Aorta (tissue), 5 donors: ENCODE measurements at regions of chr6 and their contacts with region 1.

Region 1: DNA sequence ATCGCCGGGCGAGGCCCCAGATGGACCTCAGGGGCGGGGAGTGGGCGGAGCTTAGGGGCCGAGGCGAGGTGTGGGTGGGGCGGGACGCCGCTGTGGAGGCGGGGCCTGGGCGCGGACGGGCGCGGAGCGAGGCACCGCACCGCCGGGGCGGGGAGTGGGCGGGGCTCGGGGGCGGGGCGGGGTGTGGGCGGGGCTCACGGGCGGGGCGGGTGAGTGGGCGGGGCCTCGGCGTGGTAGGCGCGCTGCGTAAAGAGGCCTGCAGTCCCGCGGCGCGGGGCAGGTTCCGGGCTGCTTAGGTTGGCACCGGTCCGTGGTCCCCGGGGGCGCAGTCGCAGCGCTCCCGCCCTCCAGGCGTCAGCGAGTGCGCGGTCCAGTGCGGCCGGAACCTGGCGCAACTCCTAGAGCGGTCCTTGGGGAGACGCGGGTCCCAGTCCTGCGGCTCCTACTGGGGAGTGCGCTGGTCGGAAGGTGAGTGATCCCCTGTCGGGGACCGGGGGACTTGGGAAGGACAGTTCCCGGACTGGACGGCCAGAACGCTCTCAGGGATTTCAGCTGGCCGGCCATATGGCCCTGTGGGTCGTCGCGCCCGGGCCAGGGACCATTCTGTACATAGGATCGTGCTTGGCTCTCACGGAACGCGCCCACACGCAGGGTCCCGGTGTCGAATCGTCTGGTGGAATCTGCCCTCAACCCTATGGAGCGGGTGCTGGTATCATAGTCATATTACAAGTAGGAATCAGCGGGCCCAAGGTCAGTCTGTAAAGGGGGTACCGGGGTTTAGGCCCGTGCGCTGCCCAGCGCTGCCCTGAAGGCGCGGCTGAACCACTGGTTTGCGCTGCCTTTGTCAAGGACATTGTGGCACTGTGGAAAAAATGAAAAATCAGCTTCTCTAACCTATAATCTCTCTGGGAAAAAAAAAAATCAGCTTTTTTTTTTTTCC is at the start of gene NQO2:
- DNase-seq: peak; percentile 95 to 98
- ATAC-seq: peak; percentile 96
- H3K4me3 ChIP-seq: peak within 1 kb of the TSS; percentile 11 to 36
- H3K27ac ChIP-seq: peak within 1 kb of the TSS in 1 of 2 donors; percentile 60
- H3K4me1 ChIP-seq: peaks cover 0 to 3% of the 10 kb centered on the region in 2 donors
- H3K27me3 ChIP-seq: no peaks in the 10 kb centered on the region
- total RNA-seq, gene NQO2: 23.2 to 40.3 TPM

Region 2: DNA sequence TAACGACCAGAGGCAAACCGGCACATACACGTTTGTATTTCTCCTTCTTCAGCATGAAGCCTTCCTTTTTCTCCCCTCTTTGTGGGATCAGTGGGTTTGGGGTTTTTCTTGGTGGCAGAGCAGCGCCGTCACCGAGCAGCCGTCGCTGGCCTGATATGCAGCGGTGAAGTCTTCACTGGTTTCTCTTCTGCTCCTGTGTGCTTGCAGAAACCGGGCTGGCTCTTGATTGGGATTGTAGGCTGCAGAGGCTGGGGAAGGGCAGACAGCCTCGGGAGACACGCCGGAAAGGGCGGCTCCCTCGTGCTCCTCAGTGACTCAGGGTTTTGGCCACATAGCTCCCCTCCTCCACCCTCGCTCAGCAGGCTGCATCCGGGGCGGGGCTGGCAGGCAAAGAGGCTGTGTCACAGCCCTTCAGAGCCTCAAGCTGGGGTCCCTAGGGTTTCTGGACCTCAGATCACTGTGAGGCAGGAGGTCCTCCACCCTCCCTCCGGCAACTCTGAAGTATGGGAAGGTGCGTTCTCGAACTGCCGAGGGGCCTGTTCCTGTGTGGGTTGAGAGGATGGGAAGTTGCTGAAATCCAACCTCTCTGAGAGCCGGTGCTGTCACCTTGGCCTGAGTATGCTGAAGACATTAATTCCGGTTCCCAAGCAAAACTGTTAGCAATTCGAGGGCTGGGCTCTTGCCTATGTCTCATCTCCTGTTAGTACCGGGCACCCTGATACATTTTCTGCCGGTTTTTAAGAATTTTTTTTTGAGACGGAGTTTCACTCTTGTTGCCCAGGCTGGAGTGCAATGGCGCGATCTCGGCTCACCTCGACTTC is 24.0 kb after region 1 on chr6:
- intact Hi-C with region 1: loop called in 1 of 2 experiments (anchors 2 kb)
- DNase-seq: peak; percentile 97
- ATAC-seq: peak; percentile 95
- H3K4me3 ChIP-seq: peak overlapping the region in 1 of 2 donors; percentile 40
- H3K27ac ChIP-seq: peak overlapping the region in 1 of 2 donors; percentile 89
- H3K4me1 ChIP-seq: no peaks in the 10 kb centered on the region
- H3K27me3 ChIP-seq: no peaks in the 10 kb centered on the region

Region 3: GRCh38 chr6:3052481-3053230 is 52.8 kb after region 1 on chr6:
- intact Hi-C with region 1: loop called (anchors 1 kb)
- DNase-seq: no peak
- ATAC-seq: no peak
- H3K4me3 ChIP-seq: no peak overlapping the region
- H3K27ac ChIP-seq: no peak overlapping the region
- H3K4me1 ChIP-seq: no peaks in the 10 kb centered on the region
- H3K27me3 ChIP-seq: no peaks in the 10 kb centered on the region

Region 4: DNA sequence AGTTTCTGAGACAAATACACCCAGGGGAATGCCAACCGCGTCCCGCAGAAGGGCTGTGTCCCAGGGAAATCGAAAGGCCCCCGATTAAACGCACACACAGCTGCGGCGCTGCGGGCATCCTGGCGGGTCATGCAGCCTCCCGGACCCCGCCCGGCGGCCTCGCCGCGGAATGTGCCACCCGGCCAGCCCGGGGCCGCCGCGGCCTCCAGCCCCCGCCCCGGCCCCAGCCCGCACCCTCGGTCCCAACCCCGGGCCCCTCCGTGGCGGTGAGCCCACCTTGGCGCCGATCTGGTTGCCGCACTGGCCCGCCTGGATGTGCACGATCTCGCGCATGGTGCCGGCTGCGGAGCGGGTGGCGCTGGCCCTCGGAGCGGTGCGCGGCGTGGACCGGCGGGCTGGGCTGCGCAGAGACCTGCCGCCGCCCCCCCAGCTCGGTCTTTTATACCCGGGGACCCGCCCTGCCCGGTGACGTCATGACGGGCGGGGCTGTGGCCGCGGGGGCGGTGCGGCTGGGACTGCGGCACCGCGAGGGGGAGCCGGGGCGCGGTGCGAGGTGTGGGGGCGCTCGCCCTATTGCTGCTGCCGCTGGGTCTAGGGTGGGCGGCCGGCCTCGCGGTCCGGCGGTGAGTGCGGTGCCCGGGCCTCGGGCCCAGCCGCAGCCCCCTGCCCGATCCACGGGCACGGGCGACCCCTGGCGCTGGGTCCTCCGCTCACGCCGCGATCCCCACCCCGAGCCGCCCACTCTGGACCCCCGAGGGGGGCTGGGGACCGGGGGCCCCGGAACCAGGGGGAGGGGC is 157.4 kb after region 1 on chr6 and contains the start of gene TUBB2A:
- intact Hi-C with region 1: no loop called
- DNase-seq: peak; percentile 92 to 95
- ATAC-seq: peak; percentile 94
- H3K4me3 ChIP-seq: peak within 1 kb of the TSS; percentile 83 to 89
- H3K27ac ChIP-seq: peak within 1 kb of the TSS in 1 of 2 donors; percentile 58
- H3K4me1 ChIP-seq: no peaks in the 10 kb centered on the region
- H3K27me3 ChIP-seq: peaks cover 0 to 2% of the 10 kb centered on the region in 2 donors
- total RNA-seq, gene TUBB2A: 33.7 to 40.0 TPM

Region 5: DNA sequence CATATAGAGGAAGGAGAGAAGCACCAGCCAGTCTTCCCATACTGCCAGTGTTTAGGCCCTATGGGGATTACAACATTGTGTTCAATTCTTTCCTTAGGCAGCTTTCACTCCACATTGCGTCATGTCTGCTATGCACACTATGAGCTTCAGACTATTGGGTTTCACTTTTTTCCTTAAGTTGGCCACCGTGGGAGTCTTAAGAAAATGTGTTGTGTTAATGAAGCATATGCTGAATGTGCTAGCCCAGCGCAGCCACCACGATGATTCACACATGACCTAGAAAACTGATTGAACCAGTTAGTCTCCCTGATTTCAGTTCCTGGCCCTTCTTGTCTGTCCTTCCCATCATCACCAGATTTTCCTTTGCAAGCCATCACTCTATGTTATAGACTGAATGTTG is 206.0 kb after region 1 on chr6:
- intact Hi-C with region 1: no loop called
- DNase-seq: no peak
- ATAC-seq: no peak
- H3K4me3 ChIP-seq: no peak overlapping the region
- H3K27ac ChIP-seq: no peak overlapping the region
- H3K4me1 ChIP-seq: peaks cover 0 to 2% of the 10 kb centered on the region in 2 donors
- H3K27me3 ChIP-seq: no peaks in the 10 kb centered on the region